ENCODE measurements at regions of chr6 and their contacts with region 1.

Region 1: DNA sequence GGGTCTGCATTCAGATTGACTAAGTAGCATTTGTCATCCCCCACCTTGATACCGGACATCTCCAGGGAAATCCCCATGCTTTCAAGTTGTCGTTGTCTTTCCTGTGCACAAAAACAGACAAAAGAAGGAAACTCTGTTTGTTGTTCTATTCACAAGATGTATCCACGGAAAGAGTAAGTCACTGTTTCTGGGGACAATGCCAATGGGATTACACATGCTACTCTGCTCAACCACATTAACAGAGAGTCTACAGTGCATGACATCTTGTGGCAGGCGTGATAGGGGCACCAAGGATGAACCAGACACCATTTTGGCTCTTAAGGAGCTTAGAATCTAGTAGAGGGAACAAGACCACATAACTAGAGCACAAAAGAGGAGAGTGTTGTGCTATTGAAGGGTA is 124.4 kb upstream of the NUP153 start:
- DNase-seq: no peak

Region 2: DNA sequence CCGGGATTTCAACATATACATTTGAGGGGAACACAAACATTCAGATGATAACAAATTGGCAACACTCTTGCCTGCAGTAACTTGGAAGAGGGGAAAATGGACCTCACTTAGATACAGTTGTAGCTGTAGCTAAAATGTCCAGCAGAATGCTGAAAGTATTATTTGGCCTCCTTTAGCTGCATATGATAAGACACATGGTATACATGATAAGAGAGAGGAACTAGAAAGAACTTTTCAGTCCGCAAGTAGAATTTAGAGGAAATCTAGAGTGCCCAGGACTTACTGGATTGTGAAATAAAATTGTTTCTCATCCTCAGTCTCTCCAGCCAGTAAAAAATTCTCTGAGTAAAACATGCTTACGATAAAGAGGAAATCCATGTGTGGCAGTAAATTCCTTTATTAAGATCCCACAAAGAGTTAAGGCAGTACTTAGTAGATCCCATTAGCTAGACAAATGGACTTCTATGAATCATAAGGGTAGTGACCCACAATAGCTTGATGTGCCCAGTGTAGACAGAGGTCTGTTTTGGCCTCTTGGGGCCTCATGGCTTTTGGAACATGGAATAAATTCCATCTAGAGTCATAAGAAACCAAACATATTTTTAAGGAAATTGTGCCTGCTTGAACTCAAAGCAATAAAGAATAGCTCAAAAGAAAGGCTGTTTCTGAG is 637.9 kb before region 1 on chr6:
- intact Hi-C with region 1: no loop called
- DNase-seq: no peak

Region 3: GRCh38 chr6:18122124-18123093 is 291.3 kb after region 1 on chr6 and contains the start of gene NHLRC1:
- intact Hi-C with region 1: loop called (anchors 5 kb)
- DNase-seq: peak; percentile 93
- total RNA-seq, gene NHLRC1: 1.6 TPM